WTC11 (cell line): ENCODE measurements at regions of chr11 and their contacts with region 1.

Region 1: DNA sequence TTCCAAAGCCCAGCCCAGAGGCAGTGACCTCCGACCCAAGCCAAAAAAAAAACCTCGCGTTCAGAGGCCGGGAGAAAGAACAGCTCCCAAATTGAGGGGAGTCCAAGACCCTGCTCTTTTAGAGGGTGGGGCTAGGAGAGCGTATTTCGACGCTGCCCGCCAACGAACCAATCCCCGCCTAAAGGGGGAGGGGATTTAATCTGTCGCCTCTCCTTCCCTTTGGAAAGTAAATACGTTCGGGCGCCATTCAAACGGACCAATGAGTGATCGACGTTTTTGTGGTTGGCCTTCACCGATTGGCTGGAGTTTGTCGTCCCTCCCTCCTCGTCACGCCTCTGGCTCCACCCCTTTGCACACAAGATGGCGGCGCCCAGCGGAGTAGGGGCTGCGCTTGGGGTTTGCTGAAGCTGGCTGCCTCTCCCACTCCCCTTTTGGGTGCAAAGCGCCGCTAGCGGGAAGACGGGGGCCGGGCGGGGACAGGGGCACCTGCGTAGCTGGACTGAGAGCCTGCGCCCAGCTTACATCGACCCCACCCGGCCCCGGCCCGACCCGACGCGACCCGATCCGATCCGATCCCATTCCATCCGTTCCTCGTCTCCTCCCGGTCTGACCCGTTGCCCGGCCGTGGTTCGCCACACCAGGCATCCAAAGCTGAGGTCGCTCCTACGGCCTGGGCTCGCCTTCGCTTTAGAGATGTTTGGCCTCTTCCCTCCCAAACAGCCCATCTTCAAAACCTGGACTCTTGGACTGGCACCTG is at the start of gene RNF26:
- DNase-seq: peak; percentile 95
- ATAC-seq: peak; percentile 82
- H3K4me3 Mint-ChIP-seq: peak within 1 kb of the TSS; percentile 100
- H3K27ac Mint-ChIP-seq: peak within 1 kb of the TSS; percentile 100
- H3K4me1 Mint-ChIP-seq: peaks cover 44% of the 10 kb centered on the region
- H3K27me3 Mint-ChIP-seq: peaks cover 11% of the 10 kb centered on the region
- CTCF ChIP-seq: no peak
- total RNA-seq, gene RNF26: 90.0 to 91.1 TPM (median 90.6 TPM) in 3 replicates

Region 2: DNA sequence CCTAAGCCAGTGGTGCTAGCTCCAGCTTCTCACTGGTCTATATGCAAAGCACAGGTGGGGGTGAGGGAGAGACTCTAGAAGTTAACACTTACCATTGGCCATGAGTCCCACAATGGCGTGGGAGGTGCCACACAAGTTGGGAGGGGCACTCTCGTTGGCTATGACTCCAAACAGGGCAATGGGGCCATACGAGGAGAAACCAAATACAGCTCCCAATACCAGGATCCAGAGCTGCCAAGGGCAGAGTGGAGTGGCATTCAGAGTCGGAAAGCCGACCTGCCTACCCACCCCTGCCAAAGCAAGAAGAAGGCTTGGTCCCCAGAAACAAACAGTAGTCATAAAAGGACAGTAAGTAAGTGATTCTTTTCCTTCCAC is 309.3 kb before region 1 on chr11:
- CTCF ChIA-PET with region 1: no interaction called
- POLR2A ChIA-PET with region 1: no interaction called
- DNase-seq: no peak
- ATAC-seq: peak; percentile 22
- H3K4me3 Mint-ChIP-seq: no peak overlapping the region
- H3K27ac Mint-ChIP-seq: 0 out of 2 replicates have a peak overlapping the region, but pooled peaks have one; percentile 70
- H3K4me1 Mint-ChIP-seq: peaks cover 19% of the 10 kb centered on the region
- H3K27me3 Mint-ChIP-seq: no peaks in the 10 kb centered on the region
- CTCF ChIP-seq: no peak

Region 3: DNA sequence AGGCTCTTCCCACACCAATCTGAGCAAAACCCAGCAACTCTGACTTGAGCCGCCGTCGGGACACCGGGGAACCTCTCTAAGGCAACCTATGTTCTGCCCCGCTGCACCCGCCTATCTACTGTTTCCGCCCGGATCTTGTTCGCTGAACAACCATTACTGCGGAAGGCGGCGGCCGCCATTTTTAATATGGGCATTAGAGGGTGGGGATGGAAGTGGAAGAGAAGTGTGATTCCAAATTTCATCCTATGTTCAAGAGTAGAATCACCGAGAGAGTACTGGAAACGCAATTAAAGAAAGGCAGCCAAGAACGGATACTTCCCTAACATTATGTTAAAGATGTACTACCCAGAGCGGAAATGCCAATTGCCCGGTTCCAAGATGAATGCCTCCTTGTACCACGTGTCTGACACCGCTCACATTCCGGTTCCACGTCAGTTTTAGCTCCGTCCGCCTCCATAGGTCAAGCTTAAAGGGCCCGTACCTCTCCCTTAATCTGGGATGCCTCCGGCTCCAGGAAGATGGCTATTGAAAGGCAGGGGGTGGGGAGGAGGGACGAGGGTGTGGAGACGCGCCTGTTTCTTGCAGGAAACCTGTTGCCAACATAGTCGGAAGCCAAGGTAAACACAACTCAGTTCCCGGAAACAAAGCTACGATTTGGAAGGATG is 232.5 kb before region 1 on chr11 and contains the start of gene DPAGT1:
- CTCF ChIA-PET with region 1: interaction called, 15 read pairs
- POLR2A ChIA-PET with region 1: no interaction called
- DNase-seq: peak; percentile 88
- ATAC-seq: peak; percentile 83
- H3K4me3 Mint-ChIP-seq: peak within 1 kb of the TSS; percentile 92
- H3K27ac Mint-ChIP-seq: peak within 1 kb of the TSS; percentile 100
- H3K4me1 Mint-ChIP-seq: peaks cover 33% of the 10 kb centered on the region
- H3K27me3 Mint-ChIP-seq: no peaks in the 10 kb centered on the region; the same call in 1 of the 2 replicates
- CTCF ChIP-seq: no peak
- total RNA-seq, gene DPAGT1: 59.6 to 64.6 TPM (median 63.5 TPM) in 3 replicates

Region 4: GRCh38 chr11:119181677-119182412 is 152.5 kb before region 1 on chr11:
- CTCF ChIA-PET with region 1: no interaction called
- POLR2A ChIA-PET with region 1: no interaction called
- DNase-seq: no peak
- ATAC-seq: no peak
- H3K4me3 Mint-ChIP-seq: no peak overlapping the region
- H3K27ac Mint-ChIP-seq: no peak overlapping the region
- H3K4me1 Mint-ChIP-seq: no peaks in the 10 kb centered on the region
- H3K27me3 Mint-ChIP-seq: no peaks in the 10 kb centered on the region; the same call in 1 of the 2 replicates
- CTCF ChIP-seq: no peak

Region 5: GRCh38 chr11:119205574-119206510 is 128.5 kb before region 1 on chr11 and contains the start of gene CBL:
- CTCF ChIA-PET with region 1: interaction called, 18 read pairs
- POLR2A ChIA-PET with region 1: interaction called, 4 read pairs
- DNase-seq: peak; percentile 98
- ATAC-seq: peak; percentile 79
- H3K4me3 Mint-ChIP-seq: peak within 1 kb of the TSS; percentile 95
- H3K27ac Mint-ChIP-seq: peak within 1 kb of the TSS; percentile 96
- H3K4me1 Mint-ChIP-seq: peaks cover 39% of the 10 kb centered on the region
- H3K27me3 Mint-ChIP-seq: no peaks in the 10 kb centered on the region
- CTCF ChIP-seq: peak; percentile 78
- total RNA-seq, gene CBL: 45.6 to 47.9 TPM (median 46.7 TPM) in 3 replicates

Region 6: GRCh38 chr11:119323538-119324033 is 10.8 kb before region 1 on chr11:
- CTCF ChIA-PET with region 1: interaction called, 387 read pairs
- POLR2A ChIA-PET with region 1: interaction called, 35 read pairs
- DNase-seq: peak; percentile 90
- ATAC-seq: peak; percentile 5
- H3K4me3 Mint-ChIP-seq: no peak overlapping the region; the same call in 1 of the 2 replicates
- H3K27ac Mint-ChIP-seq: no peak overlapping the region
- H3K4me1 Mint-ChIP-seq: peaks cover 32% of the 10 kb centered on the region
- H3K27me3 Mint-ChIP-seq: peaks cover 3% of the 10 kb centered on the region; the same call in 1 of the 2 replicates
- CTCF ChIP-seq: peak; percentile 86

Region 7: GRCh38 chr11:119363851-119364590 is 29.7 kb after region 1 on chr11:
- CTCF ChIA-PET with region 1: interaction called, 132 read pairs
- POLR2A ChIA-PET with region 1: interaction called, 10 read pairs
- DNase-seq: peak; percentile 68
- ATAC-seq: peak; percentile 72
- H3K4me3 Mint-ChIP-seq: peak overlapping the region; percentile 69
- H3K27ac Mint-ChIP-seq: no peak overlapping the region
- H3K4me1 Mint-ChIP-seq: peaks cover 50% of the 10 kb centered on the region
- H3K27me3 Mint-ChIP-seq: peaks cover 49% of the 10 kb centered on the region
- CTCF ChIP-seq: no peak

Region 8: GRCh38 chr11:119409731-119410130 is 75.4 kb after region 1 on chr11:
- CTCF ChIA-PET with region 1: no interaction called
- POLR2A ChIA-PET with region 1: no interaction called
- DNase-seq: no peak
- ATAC-seq: no peak
- H3K4me3 Mint-ChIP-seq: no peak overlapping the region
- H3K27ac Mint-ChIP-seq: no peak overlapping the region
- H3K4me1 Mint-ChIP-seq: 0 out of 2 replicates have a peak, but pooled peaks cover 4% of the 10 kb centered on the region
- H3K27me3 Mint-ChIP-seq: no peaks in the 10 kb centered on the region
- CTCF ChIP-seq: no peak

Region 9: GRCh38 chr11:119421941-119422808 is 87.8 kb after region 1 on chr11:
- CTCF ChIA-PET with region 1: interaction called, 16 read pairs
- POLR2A ChIA-PET with region 1: interaction called, 3 read pairs
- DNase-seq: peak; percentile 53
- ATAC-seq: peak; percentile 12
- H3K4me3 Mint-ChIP-seq: peak overlapping the region; percentile 96
- H3K27ac Mint-ChIP-seq: peak overlapping the region; percentile 92
- H3K4me1 Mint-ChIP-seq: peaks cover 81% of the 10 kb centered on the region
- H3K27me3 Mint-ChIP-seq: no peaks in the 10 kb centered on the region
- CTCF ChIP-seq: no peak